SK-N-SH (cell line): ENCODE measurements at regions of chr16 and their contacts with region 1.

Region 1: GRCh38 chr16:67393035-67393787 is at the start of gene TPPP3:
- DNase-seq: peak; percentile 98
- H3K4me3 ChIP-seq: peak within 1 kb of the TSS; percentile 55 to 59
- H3K27ac ChIP-seq: peak within 1 kb of the TSS; percentile 64 to 65; a peak in 3 of 4 replicates
- H3K4me1 ChIP-seq: peaks cover 10 to 50% of the 10 kb centered on the region in 2 experiments; a peak in 2 of 4 replicates
- H3K27me3 ChIP-seq: no peaks in the 10 kb centered on the region
- CTCF ChIP-seq: peak; percentile 64
- EP300 ChIP-seq: no peak
- RAD21 ChIP-seq: peak; percentile 49
- polyA plus RNA-seq, gene TPPP3: 33.5 and 36.2 TPM in 2 replicates

Region 2: DNA sequence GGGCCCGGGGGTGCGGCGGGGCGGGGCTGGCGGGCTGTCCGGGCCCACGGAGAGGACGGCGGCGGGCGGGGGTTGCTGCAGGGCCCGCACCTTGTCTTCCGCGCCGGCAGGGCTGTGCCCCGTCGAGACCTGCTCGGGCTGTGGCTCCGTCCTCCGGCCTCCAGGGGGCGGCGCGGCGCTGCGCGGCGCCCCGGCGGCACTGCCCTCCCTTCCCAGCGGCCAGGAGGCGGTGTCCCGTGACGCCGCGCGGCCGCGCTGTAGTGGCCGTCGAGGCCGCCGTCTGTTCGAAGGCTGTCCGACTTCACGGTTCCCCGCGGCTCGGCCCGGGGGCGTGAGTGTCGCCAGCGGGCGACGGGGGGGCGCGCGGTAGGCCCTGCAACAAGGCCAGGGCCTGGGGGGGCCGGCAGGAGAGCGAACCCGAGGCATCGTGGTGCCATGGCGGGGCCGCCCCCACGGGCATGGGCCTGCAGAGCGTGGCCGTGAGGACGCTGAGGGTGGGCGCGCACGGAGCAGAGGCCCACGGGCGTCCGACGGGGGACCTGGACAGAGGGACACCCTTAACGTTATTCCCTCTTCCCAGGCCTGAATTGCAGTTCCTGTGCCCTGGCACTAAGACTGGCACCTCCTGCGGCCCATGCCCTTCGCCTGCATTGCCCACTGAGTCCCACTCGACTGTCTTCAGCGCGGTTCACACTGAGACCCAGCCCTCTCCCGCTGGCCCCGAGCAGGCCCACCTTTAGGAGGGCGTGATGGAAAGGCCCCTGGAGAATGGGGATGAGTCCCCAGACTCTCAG is 113.7 kb before region 1 on chr16 and contains the start of gene PLEKHG4:
- CTCF ChIA-PET with region 1: no interaction called
- POLR2A ChIA-PET with region 1: no interaction called
- DNase-seq: peak; percentile 99
- H3K4me3 ChIP-seq: peak within 1 kb of the TSS; percentile 64
- H3K27ac ChIP-seq: peak within 1 kb of the TSS; percentile 59 to 100
- H3K4me1 ChIP-seq: peaks cover 25 to 41% of the 10 kb centered on the region in 2 experiments; a peak in 3 of 4 replicates
- H3K27me3 ChIP-seq: no peaks in the 10 kb centered on the region
- CTCF ChIP-seq: peak; percentile 62
- EP300 ChIP-seq: 0 out of 4 replicates have a peak, but pooled peaks of 1 of the 2 experiments have one; percentile 8
- RAD21 ChIP-seq: peak; percentile 54
- polyA plus RNA-seq, gene PLEKHG4: 65.5 and 87.0 TPM in 2 replicates

Region 3: DNA sequence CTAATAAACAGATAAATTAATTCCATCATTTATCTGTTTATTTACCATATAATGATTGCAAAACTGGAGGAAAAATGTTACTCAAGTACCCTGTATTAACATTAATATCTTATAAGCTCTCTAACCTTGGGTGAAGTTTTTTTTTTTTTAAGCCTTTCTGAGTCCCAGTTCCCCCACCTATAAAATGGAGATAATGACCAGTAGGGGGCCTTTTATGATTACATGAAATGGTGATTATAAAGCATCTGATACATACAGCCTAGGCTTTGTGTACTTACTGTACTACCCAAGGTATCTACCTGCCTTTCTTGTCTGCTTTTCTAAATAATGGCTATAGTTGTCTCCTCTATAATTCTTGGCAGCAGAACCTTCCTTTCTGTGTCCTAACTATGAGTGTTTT is 44.0 kb before region 1 on chr16:
- CTCF ChIA-PET with region 1: no interaction called
- POLR2A ChIA-PET with region 1: no interaction called
- DNase-seq: peak; percentile 33
- H3K4me3 ChIP-seq: no peak overlapping the region
- H3K27ac ChIP-seq: no peak overlapping the region
- H3K4me1 ChIP-seq: no peaks in the 10 kb centered on the region
- H3K27me3 ChIP-seq: no peaks in the 10 kb centered on the region
- CTCF ChIP-seq: peak; percentile 70
- EP300 ChIP-seq: no peak
- RAD21 ChIP-seq: peak; percentile 45

Region 4: DNA sequence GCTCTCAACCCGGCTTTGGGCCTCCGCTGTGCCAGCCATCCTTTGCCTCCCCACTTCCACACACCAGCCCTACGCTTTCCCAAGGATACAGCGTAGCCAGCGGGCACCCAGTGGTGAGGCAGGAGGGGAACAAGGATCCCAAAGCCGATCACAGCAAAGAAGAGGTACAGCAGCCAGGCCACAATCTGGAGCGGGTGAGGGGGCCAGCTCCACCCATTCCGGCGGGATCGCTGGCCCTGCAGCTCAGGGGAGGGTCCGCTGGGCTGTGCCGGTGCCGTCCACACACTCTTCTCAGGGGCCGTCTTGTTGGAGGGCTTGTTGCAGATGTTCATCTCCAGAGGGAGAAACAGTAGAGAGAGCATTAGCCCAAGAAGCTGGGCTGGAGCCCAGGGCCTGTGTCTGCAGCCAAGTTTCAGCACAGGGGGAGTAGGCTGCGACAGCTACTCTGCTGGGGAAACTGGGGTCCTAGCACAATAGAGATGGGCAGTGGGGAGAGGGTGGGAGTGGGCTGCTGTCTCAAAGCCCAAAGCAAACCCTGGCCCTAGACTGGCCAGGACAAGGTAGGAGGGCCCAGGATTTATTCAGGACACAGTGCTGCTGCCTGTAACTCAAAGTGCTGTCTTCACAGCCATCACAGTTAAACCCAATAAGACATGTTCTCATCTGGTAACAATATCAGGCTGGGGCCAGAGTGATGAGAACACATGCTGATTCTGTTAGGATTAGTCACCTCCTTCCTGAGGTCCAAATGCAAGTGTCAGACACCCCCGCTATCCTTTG is 13.1 kb after region 1 on chr16:
- CTCF ChIA-PET with region 1: interaction called, 15 read pairs
- POLR2A ChIA-PET with region 1: interaction called, 6 read pairs
- DNase-seq: peak; percentile 54
- H3K4me3 ChIP-seq: no peak overlapping the region
- H3K27ac ChIP-seq: peak overlapping the region; percentile 78 to 98
- H3K4me1 ChIP-seq: peaks cover 21 to 30% of the 10 kb centered on the region in 2 experiments; a peak in 3 of 4 replicates
- H3K27me3 ChIP-seq: no peaks in the 10 kb centered on the region
- CTCF ChIP-seq: no peak
- EP300 ChIP-seq: no peak
- RAD21 ChIP-seq: no peak